MCF 10A (cell line): ENCODE measurements at regions of chr15 and their contacts with region 1.

Region 1: DNA sequence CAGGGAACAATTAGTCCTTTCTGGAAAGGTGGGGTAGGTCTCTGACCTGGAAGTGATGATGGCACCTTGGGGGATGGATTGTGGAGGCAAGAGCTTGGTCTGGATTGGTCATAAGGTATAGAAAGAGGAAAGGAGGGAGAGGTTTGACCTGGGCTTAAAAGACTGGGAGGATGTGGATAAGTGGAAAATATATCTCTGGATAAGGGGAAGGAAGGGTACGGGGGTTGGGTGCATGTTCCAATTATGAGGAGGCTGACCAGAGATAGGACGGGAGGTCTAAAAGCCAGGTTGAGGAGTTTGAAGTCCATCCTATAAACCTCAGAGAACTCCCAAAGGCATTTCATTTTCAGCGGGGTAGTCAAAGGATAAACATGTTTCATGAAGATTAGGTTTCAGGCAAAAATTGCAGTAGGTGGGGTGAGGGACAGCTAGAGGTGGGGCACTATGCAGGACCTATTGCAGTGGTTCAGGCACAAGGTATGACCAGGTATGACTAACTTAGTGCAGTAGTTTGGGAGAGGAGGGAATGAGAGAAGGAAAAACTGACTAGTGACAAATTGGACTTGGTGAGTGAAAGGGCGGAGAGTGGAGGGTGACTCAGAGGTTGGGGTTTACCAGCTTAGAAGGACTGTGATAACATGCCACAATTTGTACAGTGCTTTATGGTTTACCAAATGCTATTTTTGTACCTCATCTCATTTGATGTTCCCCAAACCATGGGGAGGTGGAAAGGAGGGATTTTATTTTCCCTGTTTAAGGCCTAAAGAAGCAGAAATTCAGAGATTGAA is 10.7 kb downstream of the PDE8A start:
- DNase-seq: peak; percentile 77
- H3K4me3 Mint-ChIP-seq: no peak overlapping the region
- H3K27ac Mint-ChIP-seq: peak overlapping the region; percentile 26
- H3K4me1 Mint-ChIP-seq: peaks cover 17% of the 10 kb centered on the region
- H3K27me3 Mint-ChIP-seq: no peaks in the 10 kb centered on the region
- CTCF ChIP-seq: no peak

Region 2: GRCh38 chr15:84748274-84749110 is 243.9 kb before region 1 on chr15 and contains the start of gene ZNF592:
- CTCF ChIA-PET with region 1: no interaction called
- POLR2A ChIA-PET with region 1: no interaction called
- intact Hi-C with region 1: no loop called
- DNase-seq: peak; percentile 66
- H3K4me3 Mint-ChIP-seq: peak within 1 kb of the TSS; percentile 90
- H3K27ac Mint-ChIP-seq: peak within 1 kb of the TSS; percentile 93
- H3K4me1 Mint-ChIP-seq: peaks cover 41% of the 10 kb centered on the region
- H3K27me3 Mint-ChIP-seq: no peaks in the 10 kb centered on the region
- CTCF ChIP-seq: peak; percentile 19
- total RNA-seq, gene ZNF592: 27.0 and 27.5 TPM in 2 replicates

Region 3: DNA sequence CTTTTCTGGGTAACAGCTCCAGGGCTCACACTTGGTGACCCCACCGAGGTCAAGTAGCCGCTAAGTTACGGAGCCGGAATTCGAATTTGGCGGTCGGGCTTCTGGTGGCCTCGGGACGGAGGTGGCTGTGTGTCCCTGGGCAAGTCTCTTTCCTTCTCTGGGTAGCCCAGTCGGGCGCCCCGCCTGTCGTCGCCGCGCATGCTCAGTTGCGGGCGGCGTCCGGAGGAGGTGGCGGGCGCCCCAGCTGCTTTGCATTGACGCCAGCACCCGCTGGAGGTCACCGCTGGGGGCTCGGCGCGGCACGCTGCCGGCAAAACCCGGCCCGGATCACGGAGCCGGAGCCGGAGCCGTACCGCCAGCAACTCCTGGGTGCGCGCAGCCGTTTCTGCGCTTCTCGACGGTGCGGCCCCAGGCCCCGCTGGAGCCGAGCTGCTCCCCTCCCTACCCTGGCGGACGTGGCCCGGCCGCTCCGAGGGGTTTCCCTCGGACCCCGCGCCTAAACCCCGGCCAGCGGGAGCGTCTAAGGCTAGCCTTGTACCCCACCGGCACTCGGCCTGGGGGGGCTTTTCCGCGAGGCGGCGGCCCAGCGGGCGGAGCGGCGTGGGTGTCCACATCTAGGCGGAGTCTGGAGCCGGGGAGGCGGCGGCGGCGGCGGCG is 11.2 kb before region 1 on chr15:
- CTCF ChIA-PET with region 1: interaction called, 3 read pairs
- POLR2A ChIA-PET with region 1: interaction called, 46 read pairs
- intact Hi-C with region 1: no loop called
- DNase-seq: peak; percentile 95
- H3K4me3 Mint-ChIP-seq: peak overlapping the region; percentile 86
- H3K27ac Mint-ChIP-seq: peak overlapping the region; percentile 84
- H3K4me1 Mint-ChIP-seq: peaks cover 2% of the 10 kb centered on the region
- H3K27me3 Mint-ChIP-seq: no peaks in the 10 kb centered on the region
- CTCF ChIP-seq: peak; percentile 13